ENCODE measurements at regions of chr1 and their contacts with region 1.

Region 1: DNA sequence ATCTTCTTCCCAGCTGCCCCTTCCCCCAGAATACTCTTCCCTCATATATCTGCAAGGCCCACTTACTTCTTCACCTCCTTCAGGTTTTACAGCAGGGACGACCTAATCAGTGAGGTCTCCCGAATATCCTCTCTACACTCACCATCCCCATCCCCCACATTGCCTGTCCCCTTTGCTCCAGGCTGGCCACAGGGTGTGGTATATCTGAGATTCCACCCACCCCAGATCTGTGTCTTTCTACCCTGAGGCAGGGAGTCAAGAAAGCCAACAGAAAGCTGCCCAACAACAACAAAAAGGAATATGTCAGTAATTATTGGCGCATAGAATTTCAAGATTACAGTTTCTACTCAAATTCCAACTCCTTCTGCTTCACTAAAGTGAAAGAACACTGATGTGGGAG is 30.0 kb upstream of the OPRD1 start:
- H3K4me3 ChIP-seq: no peak overlapping the region
- H3K27ac ChIP-seq: no peak overlapping the region
- H3K4me1 ChIP-seq: no peaks in the 10 kb centered on the region
- CTCF ChIP-seq: no peak

Region 2: DNA sequence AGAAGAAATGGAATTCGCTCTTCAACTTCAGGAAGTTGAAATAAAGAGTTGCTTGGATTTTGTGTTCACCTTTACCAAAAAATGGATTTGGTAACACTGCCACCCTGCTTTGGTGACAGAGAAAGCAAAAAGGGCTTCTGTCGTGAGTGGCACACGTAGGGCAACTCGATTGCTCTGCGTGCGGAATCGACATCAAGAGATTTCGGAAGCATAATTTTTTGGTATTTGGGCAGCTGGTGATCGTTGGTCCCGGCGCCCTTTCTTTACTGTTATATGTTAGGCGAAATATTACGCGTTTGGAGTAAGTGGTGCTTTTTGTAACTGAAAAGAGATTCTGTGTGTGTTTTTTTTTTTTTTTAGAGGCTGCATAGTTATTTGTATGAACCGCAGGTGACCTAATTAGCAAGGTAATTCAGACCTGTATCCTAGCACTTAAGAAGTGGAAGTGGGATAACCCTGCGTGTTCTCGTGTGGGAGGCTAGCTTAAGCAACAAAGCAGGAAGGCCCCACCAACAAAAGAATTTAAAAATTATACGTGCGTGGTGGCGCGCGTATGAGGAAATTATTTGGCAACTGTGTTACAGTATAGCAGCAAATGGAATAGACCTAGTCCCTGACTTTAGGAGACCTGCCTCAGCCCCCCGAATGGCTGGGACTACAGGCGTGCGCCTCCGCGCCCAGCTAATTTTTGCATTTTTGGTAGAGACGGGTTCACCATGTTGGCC is 133.4 kb before region 1 on chr1 and contains the start of gene RNU11:
- CTCF ChIA-PET with region 1: no interaction called
- POLR2A ChIA-PET with region 1: interaction called, 10 read pairs
- H3K4me3 ChIP-seq: peak within 1 kb of the TSS; percentile 40
- H3K27ac ChIP-seq: peak within 1 kb of the TSS; percentile 95
- H3K4me1 ChIP-seq: no peaks in the 10 kb centered on the region
- CTCF ChIP-seq: peak; percentile 28; the same call in 1 of the 2 replicates

Region 3: DNA sequence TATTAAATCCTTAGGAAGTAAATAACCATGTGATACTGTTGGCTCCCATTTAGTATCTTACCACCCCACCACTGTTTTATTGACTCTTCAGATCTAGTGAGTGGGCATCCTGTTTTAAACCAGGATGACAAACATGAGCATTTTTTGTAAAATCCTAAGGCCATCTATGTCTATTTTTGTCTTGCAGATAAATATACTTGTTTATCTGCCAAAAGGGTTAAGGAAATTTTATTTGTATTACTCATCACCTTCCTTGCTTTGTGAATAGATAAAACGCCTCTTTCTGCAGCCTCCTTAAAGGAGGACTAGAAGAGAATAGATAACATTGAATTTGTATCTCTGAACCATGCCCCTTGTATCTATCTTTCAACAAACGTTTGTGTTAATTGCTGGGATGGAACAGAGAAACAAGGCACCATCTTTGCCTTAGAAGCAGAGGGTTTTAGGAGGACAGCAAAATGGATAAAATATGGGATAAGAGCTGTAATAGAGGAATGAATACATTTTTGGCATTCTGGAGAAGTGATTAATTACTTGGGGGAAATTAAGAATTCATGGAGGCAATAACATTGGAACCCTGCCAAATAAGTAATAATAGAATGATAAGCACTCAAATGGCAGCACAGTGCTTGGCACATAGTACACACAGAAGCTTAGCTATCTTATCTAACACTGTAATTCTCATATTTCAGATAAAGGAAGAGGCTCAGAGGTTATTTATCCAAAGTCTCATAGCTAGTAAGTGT is 30.5 kb before region 1 on chr1:
- CTCF ChIA-PET with region 1: interaction called, 10 read pairs
- POLR2A ChIA-PET with region 1: no interaction called
- H3K4me3 ChIP-seq: no peak overlapping the region
- H3K27ac ChIP-seq: no peak overlapping the region
- H3K4me1 ChIP-seq: peaks cover 18% of the 10 kb centered on the region
- CTCF ChIP-seq: no peak

Region 4: DNA sequence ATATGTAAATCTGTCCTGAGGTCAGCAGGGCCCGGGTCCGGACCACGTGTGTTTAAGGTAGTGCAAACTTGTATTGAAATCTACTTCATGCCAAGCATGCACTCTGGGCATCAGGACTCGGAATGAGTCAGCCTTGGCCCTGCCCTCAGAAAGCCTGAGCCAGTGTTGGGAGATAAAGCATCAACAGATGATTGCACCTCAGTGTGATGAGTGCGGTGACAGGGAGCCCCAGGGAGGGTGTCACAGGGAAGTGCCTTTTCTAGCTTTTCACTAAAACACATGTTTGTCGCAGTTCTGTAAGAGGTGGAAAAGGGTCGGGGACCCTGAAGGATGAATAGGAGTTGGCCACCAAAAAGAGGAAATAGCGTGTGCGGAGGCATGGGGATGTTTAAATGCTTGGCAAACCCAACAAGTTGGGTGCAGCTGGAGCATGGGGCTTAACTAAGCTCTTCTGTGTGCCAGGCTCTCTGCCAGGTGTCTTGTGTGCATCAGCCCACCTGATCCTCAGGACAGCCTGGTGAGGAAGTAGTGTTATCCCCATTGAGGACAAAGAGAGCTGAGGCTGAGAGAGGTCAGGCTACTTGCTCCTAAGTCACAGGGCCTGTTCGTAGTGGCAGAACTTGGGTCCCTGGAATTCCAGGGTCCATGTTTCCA is 84.1 kb after region 1 on chr1:
- CTCF ChIA-PET with region 1: interaction called, 10 read pairs
- POLR2A ChIA-PET with region 1: no interaction called
- H3K4me3 ChIP-seq: no peak overlapping the region
- H3K27ac ChIP-seq: no peak overlapping the region
- H3K4me1 ChIP-seq: no peaks in the 10 kb centered on the region; the same call in 1 of the 2 replicates
- CTCF ChIP-seq: no peak

Region 5: GRCh38 chr1:28956038-28956464 is 174.0 kb after region 1 on chr1:
- CTCF ChIA-PET with region 1: no interaction called
- POLR2A ChIA-PET with region 1: no interaction called
- H3K4me3 ChIP-seq: no peak overlapping the region
- H3K27ac ChIP-seq: no peak overlapping the region
- H3K4me1 ChIP-seq: no peaks in the 10 kb centered on the region
- CTCF ChIP-seq: no peak

Region 6: DNA sequence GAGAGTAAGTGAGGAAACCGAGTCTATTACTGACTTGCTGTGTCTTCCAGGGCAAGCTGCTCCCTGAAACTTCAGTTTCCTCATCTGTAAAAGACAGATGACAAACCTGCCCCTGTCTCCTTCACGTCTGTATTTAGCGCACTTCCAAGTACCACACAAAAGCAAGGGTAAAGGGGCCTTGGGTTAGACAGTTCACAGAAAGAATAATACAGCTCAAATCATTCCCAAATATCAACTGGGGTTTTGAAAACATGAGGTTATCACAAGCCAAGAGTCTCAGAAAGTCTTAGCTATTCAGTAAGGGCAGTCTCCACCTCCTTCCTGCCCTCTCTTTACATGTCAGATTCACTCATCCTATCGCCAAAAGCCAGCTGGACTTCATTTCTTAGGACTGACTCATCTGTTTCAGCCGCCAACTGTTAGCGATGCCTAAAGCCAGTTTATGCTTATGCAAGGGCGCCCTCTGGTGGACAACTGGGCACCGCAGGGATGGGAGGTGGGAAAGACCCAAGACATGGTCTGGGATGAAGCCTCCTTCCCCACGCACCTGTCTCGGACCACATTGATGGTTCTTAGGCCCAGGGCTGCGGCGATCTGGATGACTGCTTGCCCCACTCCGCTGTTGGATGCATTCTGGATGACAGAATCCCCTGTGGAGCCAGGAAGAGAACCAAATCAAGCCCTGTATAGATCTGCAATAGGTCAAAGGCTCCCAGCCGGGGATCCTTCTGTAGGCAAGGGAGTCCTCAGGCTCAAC is 420.8 kb after region 1 on chr1:
- CTCF ChIA-PET with region 1: interaction called, 10 read pairs
- POLR2A ChIA-PET with region 1: no interaction called
- H3K4me3 ChIP-seq: no peak overlapping the region
- H3K27ac ChIP-seq: no peak overlapping the region
- H3K4me1 ChIP-seq: no peaks in the 10 kb centered on the region
- CTCF ChIP-seq: peak; percentile 89

Measured in HEK293 (cell line).